GM10248 (cell line): ENCODE measurements at regions of chr6 and their contacts with region 1.

Region 1: DNA sequence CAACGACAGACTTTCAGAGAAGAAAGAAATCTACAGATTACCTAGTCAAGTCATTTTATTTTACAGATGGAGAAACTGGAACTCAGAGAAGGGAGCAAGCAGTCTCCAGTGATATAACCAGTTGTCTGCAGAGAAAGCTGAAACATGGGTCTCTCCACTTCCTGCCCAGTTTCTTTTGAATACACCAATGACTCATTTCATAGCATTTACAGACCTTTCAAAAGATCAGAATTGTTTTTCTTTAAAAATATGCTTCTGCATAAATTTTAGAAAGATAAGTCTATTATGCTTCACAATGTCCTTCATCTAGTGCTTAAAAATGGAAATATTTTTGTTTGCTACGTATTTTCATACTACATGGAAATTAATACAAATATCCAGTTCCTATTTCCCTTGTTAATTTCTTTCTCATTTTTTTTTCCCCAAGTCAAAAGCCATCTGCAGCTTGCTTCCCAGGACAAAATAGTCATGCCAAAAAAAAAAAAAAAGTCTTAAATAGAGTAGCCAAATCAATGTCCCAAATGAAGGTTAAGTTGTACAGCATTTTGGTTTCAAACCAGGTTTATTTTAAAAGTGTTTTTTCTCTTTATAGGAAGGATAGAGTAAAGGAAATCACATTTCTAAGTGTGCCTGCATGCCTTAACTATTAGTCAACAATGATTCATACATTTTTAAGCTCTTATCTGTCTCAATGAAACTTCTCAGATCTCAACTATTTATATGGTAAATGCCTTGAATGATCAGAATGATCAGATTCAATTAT is 36.9 kb downstream of the ARHGAP18 start:
- DNase-seq: peak; percentile 42
- CTCF ChIP-seq: no peak

Region 2: DNA sequence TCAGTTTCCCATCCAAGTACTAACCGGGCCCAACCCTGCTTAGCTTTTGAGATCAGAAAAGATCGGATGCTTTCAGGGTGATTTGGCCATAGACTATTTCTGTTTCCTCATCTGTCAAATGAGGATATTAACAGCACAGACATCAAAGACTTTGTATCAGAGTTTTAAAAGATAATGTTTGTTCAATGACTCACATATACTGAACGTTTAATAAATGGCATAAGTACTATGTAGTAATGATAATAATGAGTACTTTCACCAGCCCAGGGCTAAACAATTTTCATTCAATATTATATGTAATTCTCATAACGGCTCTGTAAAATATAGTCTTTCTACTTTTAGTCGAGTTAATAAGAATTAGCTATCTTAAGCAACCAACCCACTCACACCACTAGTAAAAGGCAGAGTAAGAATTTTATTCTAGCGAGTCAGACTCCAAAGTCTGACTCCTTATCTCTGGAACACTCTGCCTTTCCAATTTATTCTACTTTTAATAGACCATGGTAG is 179.6 kb before region 1 on chr6:
- CTCF ChIA-PET with region 1: no interaction called
- POLR2A ChIA-PET with region 1: no interaction called
- DNase-seq: no peak
- CTCF ChIP-seq: no peak

Region 3: DNA sequence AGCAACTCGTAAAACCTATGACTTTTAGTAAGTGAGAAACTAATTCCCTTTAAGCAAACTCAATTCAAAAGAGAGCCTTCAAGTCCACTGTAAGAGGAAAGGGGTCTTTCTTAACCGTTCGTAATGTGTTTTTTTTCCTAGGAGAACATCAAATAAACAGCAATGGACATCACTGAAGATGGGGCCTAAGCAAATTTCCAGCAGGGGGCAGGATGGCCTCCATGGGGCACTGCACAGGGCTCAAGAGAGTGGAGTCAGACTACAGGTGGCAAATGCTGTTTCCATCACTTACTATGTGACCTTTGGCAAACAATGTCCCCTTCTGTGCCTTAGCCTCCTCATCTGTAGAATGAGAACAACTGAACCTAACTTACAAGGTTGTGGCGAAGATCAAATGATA is 51.8 kb before region 1 on chr6:
- CTCF ChIA-PET with region 1: no interaction called
- POLR2A ChIA-PET with region 1: no interaction called
- DNase-seq: no peak
- CTCF ChIP-seq: peak; percentile 20

Region 4: DNA sequence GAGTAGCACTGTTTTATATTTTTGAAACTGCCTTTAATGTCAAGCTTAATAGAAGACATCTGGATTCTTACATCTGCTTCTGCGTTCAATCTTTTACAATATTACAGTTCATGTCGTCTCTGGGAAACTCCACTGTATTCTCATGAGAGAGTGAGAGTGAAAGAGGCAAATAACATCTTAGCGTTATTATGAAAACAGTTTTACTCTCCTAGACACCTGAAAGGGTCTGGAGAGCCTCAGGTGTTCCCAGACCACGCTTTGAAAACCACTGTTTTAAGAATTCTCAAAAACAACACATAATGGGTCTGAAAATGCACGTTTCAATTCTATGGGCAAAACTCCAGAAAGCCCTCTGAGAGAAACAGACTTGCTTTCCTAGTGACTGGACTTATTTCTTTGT is 26.4 kb before region 1 on chr6:
- CTCF ChIA-PET with region 1: interaction called, 15 read pairs
- POLR2A ChIA-PET with region 1: no interaction called
- DNase-seq: no peak
- CTCF ChIP-seq: no peak

Region 5: DNA sequence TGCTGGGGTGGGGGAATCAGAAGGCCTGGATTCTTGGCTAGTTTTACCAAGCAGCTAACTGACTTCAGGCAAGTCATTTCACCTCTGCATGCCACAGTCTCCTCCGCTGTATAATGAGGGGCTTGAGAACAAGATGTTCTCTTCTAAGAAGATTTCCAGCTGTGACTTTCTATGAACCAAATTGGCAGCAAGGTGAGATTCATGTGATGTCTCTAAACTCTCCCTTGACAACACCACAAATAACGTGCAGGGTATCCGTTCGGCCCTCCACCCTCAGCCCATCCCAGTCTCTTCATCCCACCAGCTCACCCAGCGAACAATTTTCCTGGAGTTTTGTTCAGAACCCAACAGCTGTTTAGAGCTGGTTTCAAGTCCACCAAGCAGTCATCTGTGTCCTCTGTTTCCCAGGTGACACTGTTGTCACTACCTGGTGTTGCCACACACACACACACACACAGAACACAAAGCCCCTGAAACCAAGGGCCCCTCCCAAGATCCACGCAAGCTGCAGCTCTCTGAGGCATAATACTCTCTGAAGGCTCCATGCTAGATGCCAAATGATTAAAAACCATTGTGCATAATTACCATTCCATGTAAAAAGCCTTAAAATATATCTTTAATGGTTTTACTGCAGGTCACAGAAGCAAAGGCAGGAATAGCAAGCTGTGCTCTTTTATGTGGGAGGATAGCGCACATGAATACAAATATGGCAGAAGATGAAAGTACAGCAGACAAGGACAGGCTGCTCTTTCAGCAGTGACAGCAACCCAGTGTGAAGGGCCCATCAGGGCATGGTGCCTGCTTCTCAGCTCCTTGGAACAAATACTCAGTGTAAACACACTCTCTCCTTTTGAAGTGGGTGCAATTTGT is 11.3 kb before region 1 on chr6:
- CTCF ChIA-PET with region 1: interaction called, 28 read pairs
- POLR2A ChIA-PET with region 1: no interaction called
- DNase-seq: no peak
- CTCF ChIP-seq: no peak

Region 6: GRCh38 chr6:129709769-129710449 is 36.8 kb after region 1 on chr6 and contains the start of gene ARHGAP18:
- CTCF ChIA-PET with region 1: interaction called, 10 read pairs
- POLR2A ChIA-PET with region 1: interaction called, 3 read pairs
- DNase-seq: peak; percentile 80
- CTCF ChIP-seq: no peak

Region 7: DNA sequence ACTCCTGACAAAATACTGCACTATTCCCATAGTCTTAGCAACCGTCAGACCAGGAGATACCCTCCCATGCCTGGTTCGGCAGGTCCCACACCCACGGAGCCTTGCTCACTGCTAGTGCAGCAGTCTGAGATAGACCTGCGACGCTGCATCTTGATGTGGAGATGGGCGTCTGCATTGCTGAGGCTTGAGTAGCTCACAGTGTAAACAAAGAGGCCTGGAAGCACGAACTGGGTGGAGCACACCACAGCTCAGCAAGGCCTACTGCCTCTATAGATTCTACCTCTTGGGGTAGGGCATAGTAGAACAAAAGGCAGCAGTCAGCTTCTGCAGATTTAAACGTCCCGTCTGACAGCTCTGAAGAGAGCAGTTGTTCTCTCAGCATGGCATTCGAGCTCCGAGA is 162.6 kb after region 1 on chr6:
- CTCF ChIA-PET with region 1: no interaction called
- POLR2A ChIA-PET with region 1: no interaction called
- DNase-seq: no peak
- CTCF ChIP-seq: no peak